Endothelial cell of umbilical vein (primary cell): ENCODE measurements at regions of chr5 and their contacts with region 1.

Region 1: DNA sequence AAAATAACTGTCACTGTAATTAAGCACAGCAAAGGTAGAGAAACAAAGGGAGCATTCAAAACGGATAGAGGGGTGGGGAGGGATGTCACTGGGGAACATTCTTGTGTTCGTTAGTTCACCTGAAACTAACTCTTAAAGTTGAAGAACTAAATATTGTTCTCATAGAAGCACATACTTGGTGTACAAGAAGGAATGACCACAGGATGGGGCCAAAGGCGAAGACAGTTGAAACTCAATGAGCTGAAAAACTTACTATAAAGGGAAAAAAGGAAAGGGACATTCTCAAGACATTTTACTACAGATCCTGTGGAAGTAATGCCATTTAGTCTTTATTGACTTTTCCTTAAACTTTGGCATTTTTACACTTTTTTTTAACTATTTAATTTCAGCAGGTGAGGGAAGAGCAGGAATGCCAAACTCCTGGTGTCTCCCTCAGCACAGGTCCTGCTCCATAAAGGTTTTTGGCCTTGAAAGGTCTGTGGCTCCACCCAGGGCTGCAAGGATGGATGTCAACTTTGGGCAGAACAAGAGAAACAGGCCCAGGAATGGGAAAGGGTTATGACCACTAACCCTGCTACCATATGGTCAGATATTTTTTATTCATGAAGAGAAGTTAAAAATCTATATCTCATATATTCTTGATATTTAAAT is 197.6 kb upstream of the RASA1 start:
- DNase-seq: peak; percentile 72
- H3K4me3 ChIP-seq: no peak overlapping the region
- H3K27ac ChIP-seq: no peak overlapping the region
- H3K4me1 ChIP-seq: peaks cover 1% of the 10 kb centered on the region
- H3K27me3 ChIP-seq: no peaks in the 10 kb centered on the region
- CTCF ChIP-seq: peak; percentile 21 to 36
- POLR2A ChIP-seq: no peak

Region 2: DNA sequence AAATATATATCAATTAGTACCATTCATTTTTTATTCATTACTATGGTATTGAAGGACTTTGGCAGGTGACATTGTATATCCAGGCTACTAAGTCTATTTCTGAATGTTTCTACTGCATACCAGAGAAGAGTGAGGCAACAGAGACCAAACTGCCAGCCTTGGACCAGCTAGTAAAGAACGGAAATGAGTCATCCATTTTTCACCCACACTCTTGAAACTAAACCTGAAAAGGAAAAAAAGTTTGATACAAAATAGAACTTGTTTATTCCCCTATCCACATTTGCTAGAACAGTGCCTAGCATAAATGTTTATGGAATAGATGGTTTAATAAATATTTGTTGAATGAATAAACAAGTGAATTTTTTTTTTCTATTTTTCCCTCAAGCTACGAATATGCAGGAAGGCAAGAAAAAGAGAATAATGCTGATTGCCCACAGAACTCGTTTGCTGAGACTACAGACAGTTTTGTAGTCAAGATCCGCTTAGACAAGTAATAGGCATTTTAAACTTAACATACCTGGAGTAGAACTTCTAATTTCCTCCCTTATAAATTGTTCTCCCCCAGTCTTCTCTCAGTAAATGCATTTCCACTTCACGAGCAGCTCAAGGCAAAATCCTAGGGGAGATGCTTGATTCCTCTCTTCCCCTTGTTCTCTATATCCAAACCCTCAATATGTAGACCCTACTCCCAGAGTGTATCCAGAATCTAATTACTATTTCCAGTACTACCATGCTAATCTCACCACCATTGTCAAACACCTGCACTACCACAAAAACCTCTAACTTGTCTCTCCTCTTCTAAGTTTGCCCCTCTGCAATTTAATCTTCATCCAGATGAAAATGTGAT is 51.4 kb after region 1 on chr5:
- CTCF ChIA-PET with region 1: interaction called, 16 read pairs
- POLR2A ChIA-PET with region 1: no interaction called
- dilution Hi-C with region 1: no loop called
- intact Hi-C with region 1: no loop called
- DNase-seq: peak; percentile 89
- H3K4me3 ChIP-seq: peak overlapping the region in 1 of 3 experiments; percentile 2
- H3K27ac ChIP-seq: peak overlapping the region; percentile 98
- H3K4me1 ChIP-seq: peaks cover 30% of the 10 kb centered on the region
- H3K27me3 ChIP-seq: no peaks in the 10 kb centered on the region
- CTCF ChIP-seq: no peak
- POLR2A ChIP-seq: no peak

Region 3: GRCh38 chr5:87195104-87195591 is 125.0 kb after region 1 on chr5:
- CTCF ChIA-PET with region 1: interaction called, 19 read pairs
- POLR2A ChIA-PET with region 1: no interaction called
- dilution Hi-C with region 1: no loop called
- intact Hi-C with region 1: loop called (anchors 2 kb)
- DNase-seq: peak; percentile 85
- H3K4me3 ChIP-seq: peak overlapping the region in 1 of 3 experiments; percentile 40
- H3K27ac ChIP-seq: peak overlapping the region; percentile 98
- H3K4me1 ChIP-seq: peaks cover 25% of the 10 kb centered on the region
- H3K27me3 ChIP-seq: no peaks in the 10 kb centered on the region
- CTCF ChIP-seq: no peak
- POLR2A ChIP-seq: no peak

Region 4: GRCh38 chr5:87300744-87301143 is 230.6 kb after region 1 on chr5:
- CTCF ChIA-PET with region 1: interaction called, 15 read pairs
- POLR2A ChIA-PET with region 1: no interaction called
- dilution Hi-C with region 1: no loop called
- intact Hi-C with region 1: no loop called
- DNase-seq: peak; percentile 83
- H3K4me3 ChIP-seq: no peak overlapping the region
- H3K27ac ChIP-seq: peak overlapping the region; percentile 2
- H3K4me1 ChIP-seq: peaks cover 22% of the 10 kb centered on the region
- H3K27me3 ChIP-seq: no peaks in the 10 kb centered on the region
- CTCF ChIP-seq: no peak
- POLR2A ChIP-seq: no peak

Region 5: GRCh38 chr5:87368601-87369000 is 298.5 kb after region 1 on chr5:
- CTCF ChIA-PET with region 1: interaction called, 17 read pairs
- POLR2A ChIA-PET with region 1: no interaction called
- dilution Hi-C with region 1: no loop called
- intact Hi-C with region 1: no loop called
- DNase-seq: no peak
- H3K4me3 ChIP-seq: no peak overlapping the region
- H3K27ac ChIP-seq: no peak overlapping the region
- H3K4me1 ChIP-seq: no peaks in the 10 kb centered on the region
- H3K27me3 ChIP-seq: no peaks in the 10 kb centered on the region
- CTCF ChIP-seq: no peak
- POLR2A ChIP-seq: no peak

Region 6: GRCh38 chr5:87400305-87400899 is 330.3 kb after region 1 on chr5:
- CTCF ChIA-PET with region 1: interaction called, 134 read pairs
- POLR2A ChIA-PET with region 1: no interaction called
- dilution Hi-C with region 1: no loop called
- intact Hi-C with region 1: loop called (anchors 1 kb)
- DNase-seq: peak; percentile 63
- H3K4me3 ChIP-seq: no peak overlapping the region
- H3K27ac ChIP-seq: peak overlapping the region; percentile 39
- H3K4me1 ChIP-seq: peaks cover 13% of the 10 kb centered on the region
- H3K27me3 ChIP-seq: no peaks in the 10 kb centered on the region
- CTCF ChIP-seq: peak; percentile 29 to 33
- POLR2A ChIP-seq: peak; percentile 36